GM23248 (cell line): ENCODE measurements at regions of chr7 and their contacts with region 1.

Region 1: DNA sequence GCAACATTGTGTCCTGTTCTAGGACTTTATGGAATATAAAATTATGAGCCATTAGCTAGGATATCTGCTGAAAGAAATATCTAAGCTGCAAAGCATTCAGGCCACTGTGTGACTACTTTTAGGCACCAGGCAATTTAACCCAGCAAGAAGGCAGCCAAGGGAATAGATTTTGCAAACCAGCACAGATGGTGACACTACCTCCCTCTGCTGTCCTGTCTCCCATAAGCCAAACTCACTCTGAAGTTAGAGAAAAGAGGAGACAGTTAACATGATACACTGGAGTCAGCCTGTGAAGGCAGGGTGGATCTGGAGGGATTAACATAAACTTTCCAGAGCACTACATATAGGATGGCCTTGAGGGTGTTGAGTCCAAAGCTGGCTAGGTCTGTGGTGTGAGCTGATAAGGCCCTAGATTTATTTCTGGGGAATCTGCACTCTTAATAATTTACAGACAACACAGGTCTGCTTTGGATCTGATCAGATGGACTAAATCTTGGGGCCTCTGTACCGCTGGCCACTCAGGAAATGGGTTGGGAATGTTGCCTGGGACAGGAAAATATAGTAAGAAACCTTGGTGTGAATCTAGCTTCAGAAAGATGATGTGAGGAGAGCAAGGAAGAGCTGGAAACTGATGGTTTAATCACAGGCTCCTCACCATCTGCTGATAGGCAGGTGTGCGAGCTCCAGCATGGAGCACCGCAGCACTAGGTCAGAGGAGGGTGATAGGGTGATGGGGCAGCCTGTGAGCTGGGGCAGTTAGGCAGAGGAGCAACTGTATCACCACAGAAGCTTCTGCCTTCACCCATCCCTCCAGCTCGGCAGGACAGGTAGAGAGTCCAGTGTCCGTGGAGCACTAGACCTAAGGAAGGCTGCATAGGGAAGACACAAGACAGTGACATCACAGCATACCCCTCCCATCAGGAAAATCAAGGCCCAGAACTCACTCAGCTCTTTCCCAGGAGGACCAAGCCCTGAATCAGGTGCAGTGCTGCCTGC is 229.9 kb upstream of the PRSS1 start:
- DNase-seq: peak; percentile 29
- H3K4me3 ChIP-seq: no peak overlapping the region
- H3K27ac ChIP-seq: no peak overlapping the region
- H3K4me1 ChIP-seq: no peaks in the 10 kb centered on the region
- H3K27me3 ChIP-seq: peaks cover 33% of the 10 kb centered on the region

Region 2: DNA sequence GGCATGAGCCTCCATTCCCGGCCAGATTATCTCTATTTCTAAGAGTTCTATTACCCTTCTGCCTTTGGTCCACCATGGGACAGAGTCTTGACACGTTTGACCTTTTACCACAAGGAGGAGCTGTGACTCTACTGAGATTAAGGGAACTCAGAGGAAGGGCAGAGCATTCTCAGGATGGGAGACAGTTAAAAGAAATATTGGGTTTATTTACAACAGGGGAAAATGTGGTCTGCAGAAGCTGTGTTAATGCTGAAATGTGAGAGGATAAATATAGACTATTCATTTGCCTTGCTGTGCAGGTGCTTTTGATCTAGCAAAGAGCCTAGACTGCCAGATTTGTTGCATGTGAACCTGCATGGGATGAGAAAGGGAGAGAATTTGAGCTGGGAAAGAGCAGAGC is 215.7 kb before region 1 on chr7:
- in situ Hi-C with region 1: no loop called
- DNase-seq: peak; percentile 28
- H3K4me3 ChIP-seq: no peak overlapping the region
- H3K27ac ChIP-seq: no peak overlapping the region
- H3K4me1 ChIP-seq: no peaks in the 10 kb centered on the region
- H3K27me3 ChIP-seq: peaks cover 46% of the 10 kb centered on the region

Region 3: GRCh38 chr7:142782922-142783900 is 263.8 kb after region 1 on chr7:
- in situ Hi-C with region 1: loop called (anchors 10 kb)
- DNase-seq: peak; percentile 95
- H3K4me3 ChIP-seq: peak overlapping the region; percentile 71
- H3K27ac ChIP-seq: no peak overlapping the region
- H3K4me1 ChIP-seq: no peaks in the 10 kb centered on the region
- H3K27me3 ChIP-seq: peaks cover 8% of the 10 kb centered on the region